ENCODE measurements at regions of chr4 and their contacts with region 1.

Region 1: GRCh38 chr4:12658146-12658545 is 826.0 kb downstream of the RAB28 start:
- DNase-seq: no peak
- H3K4me3 ChIP-seq: no peak overlapping the region
- H3K27ac ChIP-seq: no peak overlapping the region
- H3K4me1 ChIP-seq: no peaks in the 10 kb centered on the region
- CTCF ChIP-seq: no peak

Region 2: DNA sequence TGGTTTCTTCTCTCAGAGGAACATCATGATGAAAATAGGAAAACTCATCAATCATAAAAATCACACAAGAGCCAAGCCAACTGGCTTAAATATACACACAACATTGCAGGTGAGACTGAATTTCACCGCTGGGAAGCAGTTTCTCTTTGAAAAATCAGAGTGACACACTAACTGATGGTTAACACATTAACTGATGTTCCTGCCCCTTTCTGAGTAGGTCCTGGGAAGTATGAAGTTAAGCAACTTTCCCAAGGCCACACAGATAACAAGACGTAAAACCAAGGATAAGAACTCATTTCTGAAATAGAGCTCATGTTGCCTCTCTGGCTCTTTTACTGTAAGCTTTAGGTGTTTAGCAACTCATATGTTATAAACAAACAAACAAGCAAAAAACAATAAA is 415.8 kb before region 1 on chr4:
- CTCF ChIA-PET with region 1: no interaction called
- POLR2A ChIA-PET with region 1: interaction called, 10 read pairs
- intact Hi-C with region 1: no loop called
- DNase-seq: no peak
- H3K4me3 ChIP-seq: no peak overlapping the region
- H3K27ac ChIP-seq: no peak overlapping the region
- H3K4me1 ChIP-seq: no peaks in the 10 kb centered on the region
- CTCF ChIP-seq: no peak

Region 3: GRCh38 chr4:12399781-12400180 is 258.4 kb before region 1 on chr4:
- CTCF ChIA-PET with region 1: no interaction called
- POLR2A ChIA-PET with region 1: no interaction called
- intact Hi-C with region 1: no loop called
- DNase-seq: no peak
- H3K4me3 ChIP-seq: no peak overlapping the region
- H3K27ac ChIP-seq: no peak overlapping the region
- H3K4me1 ChIP-seq: no peaks in the 10 kb centered on the region
- CTCF ChIP-seq: no peak

Measured in OCI-LY7 (cell line).